ENCODE measurements at regions of chr1 and their contacts with region 1.

Region 1: GRCh38 chr1:165597883-165598675 is 33.0 kb upstream of the MGST3 start:
- DNase-seq: peak; percentile 98
- ATAC-seq: peak; percentile 99
- H3K4me3 ChIP-seq: peak overlapping the region; percentile 60
- H3K27ac ChIP-seq: peak overlapping the region; percentile 35
- H3K4me1 ChIP-seq: peaks cover 2% of the 10 kb centered on the region; the same call in 1 of the 2 replicates
- H3K27me3 ChIP-seq: peaks cover 4% of the 10 kb centered on the region
- CTCF ChIP-seq: no peak
- POLR2A ChIP-seq: peak; percentile 35; the same call in 1 of the 2 replicates
- RAD21 ChIP-seq: no peak

Region 2: GRCh38 chr1:165144757-165145397 is 453.2 kb before region 1 on chr1:
- CTCF ChIA-PET with region 1: no interaction called
- POLR2A ChIA-PET with region 1: no interaction called
- dilution Hi-C with region 1: no loop called
- in situ Hi-C with region 1: loop called (anchors 25 kb)
- intact Hi-C with region 1: loop called (anchors 1 kb)
- DNase-seq: peak; percentile 44
- ATAC-seq: peak; percentile 95
- H3K4me3 ChIP-seq: no peak overlapping the region
- H3K27ac ChIP-seq: no peak overlapping the region
- H3K4me1 ChIP-seq: no peaks in the 10 kb centered on the region
- H3K27me3 ChIP-seq: no peaks in the 10 kb centered on the region
- CTCF ChIP-seq: peak; percentile 70
- POLR2A ChIP-seq: no peak
- RAD21 ChIP-seq: peak; percentile 33

Region 3: DNA sequence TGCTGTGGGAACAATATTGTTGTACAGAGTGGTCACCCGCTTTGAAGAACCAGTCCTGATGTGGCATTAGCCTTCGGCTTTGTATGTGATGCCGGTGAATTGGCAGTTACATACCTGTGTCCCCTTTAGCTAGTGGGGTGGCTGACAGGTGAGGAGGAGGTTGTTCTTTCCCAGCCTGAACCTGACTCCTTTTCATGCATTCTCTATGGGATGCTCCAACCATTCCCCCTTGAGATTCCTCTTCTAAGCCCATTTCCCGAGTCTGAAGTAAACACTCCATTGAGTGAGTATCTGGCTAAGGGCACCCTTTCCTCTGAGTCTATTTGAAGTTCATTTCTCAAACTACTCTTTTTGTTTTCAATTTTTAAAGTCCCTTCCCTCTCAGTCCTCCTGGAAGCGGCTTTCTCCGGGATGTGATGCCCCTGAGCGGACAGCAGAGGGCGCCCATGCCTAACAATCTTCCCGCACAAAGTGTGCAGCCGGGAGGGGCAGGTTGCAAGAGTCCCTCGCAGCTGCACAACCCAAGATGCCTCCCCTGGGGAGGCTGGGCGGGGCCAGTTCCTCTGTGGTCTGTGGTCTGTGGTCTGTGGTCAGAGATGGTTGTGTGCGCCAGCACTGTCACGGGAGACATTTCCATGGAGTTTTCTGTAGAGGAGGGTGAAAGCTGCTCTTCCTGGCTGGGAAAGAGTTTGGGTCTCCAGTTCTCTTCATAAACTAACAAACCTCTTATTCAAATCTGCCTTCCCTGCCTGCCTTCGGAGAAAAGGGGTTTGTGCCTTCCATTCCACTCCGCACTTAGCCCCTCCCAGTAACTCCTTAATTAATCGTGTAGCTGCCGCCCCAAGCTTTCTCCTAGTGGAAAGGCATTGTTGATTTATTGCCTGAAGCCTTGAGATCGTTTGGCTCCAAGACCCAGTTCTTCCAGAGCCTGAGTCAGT is 205.2 kb before region 1 on chr1:
- CTCF ChIA-PET with region 1: interaction called, 29 read pairs
- POLR2A ChIA-PET with region 1: no interaction called
- dilution Hi-C with region 1: loop called (anchors 25 kb)
- in situ Hi-C with region 1: loop called (anchors 5 kb)
- intact Hi-C with region 1: loop called (anchors 1 kb)
- DNase-seq: peak; percentile 82
- ATAC-seq: peak; percentile 99
- H3K4me3 ChIP-seq: no peak overlapping the region
- H3K27ac ChIP-seq: no peak overlapping the region
- H3K4me1 ChIP-seq: no peaks in the 10 kb centered on the region
- H3K27me3 ChIP-seq: peaks cover 17% of the 10 kb centered on the region
- CTCF ChIP-seq: peak; percentile 88
- POLR2A ChIP-seq: no peak
- RAD21 ChIP-seq: peak; percentile 81

Region 4: DNA sequence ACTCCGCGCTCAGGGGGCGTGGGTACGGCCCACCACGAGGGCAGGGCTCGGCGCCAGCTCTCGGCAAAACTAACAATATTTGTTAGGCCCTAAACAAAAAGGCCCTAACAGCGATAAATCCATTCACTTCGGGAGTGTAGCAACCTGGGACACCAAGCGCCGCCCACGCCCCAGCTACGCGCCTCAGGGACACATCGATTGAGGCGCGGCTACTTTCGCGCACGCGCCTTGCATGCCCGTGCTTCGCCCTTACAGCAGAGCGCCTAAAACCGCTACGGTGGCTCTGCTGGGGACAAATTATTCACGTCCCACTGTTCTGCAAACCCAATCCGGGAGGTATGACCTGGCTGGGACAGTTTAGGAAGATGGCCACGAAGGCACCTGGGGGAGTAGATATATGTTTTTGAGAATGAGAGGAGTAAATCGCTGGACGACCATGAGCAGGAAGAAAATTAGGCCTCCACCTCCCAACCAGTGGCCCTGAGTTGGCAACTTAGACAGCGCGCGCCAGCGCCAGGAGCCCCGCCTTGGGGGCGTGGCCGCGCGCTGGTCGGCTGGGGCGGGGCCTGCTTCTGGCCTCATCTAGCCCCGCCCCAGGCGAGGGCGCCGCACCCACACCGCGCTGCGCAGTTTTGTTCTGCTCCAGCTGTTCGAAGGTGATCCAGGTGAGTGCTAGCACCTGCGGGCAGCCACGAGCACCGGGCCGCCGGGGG is 32.7 kb after region 1 on chr1 and contains the start of gene MGST3:
- CTCF ChIA-PET with region 1: interaction called, 3 read pairs
- POLR2A ChIA-PET with region 1: no interaction called
- dilution Hi-C with region 1: no loop called
- in situ Hi-C with region 1: no loop called
- intact Hi-C with region 1: loop called (anchors 1 kb)
- DNase-seq: peak; percentile 95
- ATAC-seq: peak; percentile 93
- H3K4me3 ChIP-seq: peak within 1 kb of the TSS; percentile 74
- H3K27ac ChIP-seq: peak within 1 kb of the TSS; percentile 88
- H3K4me1 ChIP-seq: peaks cover 2% of the 10 kb centered on the region
- H3K27me3 ChIP-seq: no peaks in the 10 kb centered on the region
- CTCF ChIP-seq: no peak
- POLR2A ChIP-seq: peak; percentile 42; the same call in 1 of the 2 replicates
- RAD21 ChIP-seq: no peak
- total RNA-seq, gene MGST3: 132 and 159 TPM in 2 replicates

Region 5: DNA sequence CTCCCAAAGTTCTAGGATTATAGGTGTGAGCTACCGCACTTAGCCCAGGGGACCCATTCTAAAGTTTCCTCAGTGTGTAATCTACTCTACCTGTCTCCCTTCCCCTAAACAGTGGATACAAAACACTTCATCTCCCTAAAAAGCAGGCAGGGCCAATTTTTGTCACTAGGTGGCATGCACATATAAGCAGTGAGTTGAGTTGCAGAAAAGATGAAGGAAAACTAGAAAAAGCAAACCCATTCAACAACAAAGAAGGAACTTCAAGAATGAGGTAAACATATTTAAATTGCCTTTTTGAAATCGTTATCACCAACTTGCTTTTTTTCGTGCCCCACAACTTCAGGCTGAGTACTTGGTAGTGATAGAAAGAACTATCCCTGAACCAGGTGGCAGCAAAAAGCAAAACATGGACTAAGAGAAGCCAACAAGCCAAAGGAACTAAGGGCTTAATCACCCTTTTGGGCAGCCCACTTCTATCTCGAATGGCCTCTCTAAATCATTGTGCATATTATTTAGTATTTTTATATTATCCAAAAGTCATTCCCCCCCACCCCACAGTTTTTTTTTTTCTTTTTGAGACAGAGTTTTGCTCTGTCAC is 119.9 kb after region 1 on chr1:
- CTCF ChIA-PET with region 1: no interaction called
- POLR2A ChIA-PET with region 1: no interaction called
- dilution Hi-C with region 1: no loop called
- in situ Hi-C with region 1: no loop called
- intact Hi-C with region 1: loop called (anchors 1 kb)
- DNase-seq: peak; percentile 71
- ATAC-seq: peak; percentile 92
- H3K4me3 ChIP-seq: no peak overlapping the region
- H3K27ac ChIP-seq: no peak overlapping the region
- H3K4me1 ChIP-seq: no peaks in the 10 kb centered on the region
- H3K27me3 ChIP-seq: no peaks in the 10 kb centered on the region
- CTCF ChIP-seq: peak; percentile 87
- POLR2A ChIP-seq: no peak
- RAD21 ChIP-seq: peak; percentile 94

Region 6: DNA sequence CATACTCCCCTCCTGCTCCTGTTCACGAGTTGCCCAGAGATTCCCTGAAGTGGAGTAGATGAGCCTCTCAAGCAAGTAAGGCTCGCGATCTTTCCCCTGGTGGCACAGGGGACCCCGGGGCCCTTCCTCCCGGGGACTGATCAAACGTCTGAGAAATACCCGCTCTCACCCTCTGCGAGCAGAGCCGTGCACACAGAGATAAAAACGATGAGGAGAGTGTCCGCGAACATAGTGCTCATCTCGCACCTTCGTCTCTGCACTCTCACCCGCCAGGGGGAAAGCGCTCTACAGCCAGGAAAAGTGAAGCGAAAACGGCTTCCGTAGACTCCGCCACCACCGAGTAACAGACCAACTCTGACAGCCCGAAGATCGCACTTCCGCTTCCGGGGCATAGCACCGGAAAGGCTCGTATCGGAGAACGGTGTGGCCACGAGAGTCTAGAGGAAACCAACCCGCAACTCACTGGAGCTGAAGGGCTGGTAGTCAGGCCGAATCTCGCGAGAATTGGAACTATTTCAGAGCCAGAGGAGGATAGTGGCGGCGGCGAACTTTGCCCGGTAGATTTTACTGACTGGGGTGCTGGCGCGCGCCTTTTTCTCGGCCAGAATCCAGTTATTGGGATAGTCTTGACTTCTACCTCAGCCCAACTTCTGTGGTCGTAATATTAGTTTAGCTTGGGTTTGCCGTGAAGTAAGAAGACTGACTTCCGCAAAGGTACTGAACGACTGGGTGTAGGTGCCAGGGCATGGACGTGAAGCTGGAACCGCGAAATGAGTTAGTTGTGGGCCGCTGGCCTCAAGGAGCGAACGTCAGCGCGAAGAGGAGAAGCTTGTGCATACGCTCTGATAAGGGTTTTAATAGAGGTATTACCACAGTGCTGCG is 170.7 kb after region 1 on chr1 and contains the start of gene TMCO1:
- CTCF ChIA-PET with region 1: no interaction called
- POLR2A ChIA-PET with region 1: no interaction called
- dilution Hi-C with region 1: no loop called
- in situ Hi-C with region 1: no loop called
- intact Hi-C with region 1: no loop called
- DNase-seq: peak; percentile 99
- ATAC-seq: peak; percentile 91
- H3K4me3 ChIP-seq: peak within 1 kb of the TSS; percentile 80
- H3K27ac ChIP-seq: peak within 1 kb of the TSS; percentile 95
- H3K4me1 ChIP-seq: peaks cover 7% of the 10 kb centered on the region
- H3K27me3 ChIP-seq: no peaks in the 10 kb centered on the region
- CTCF ChIP-seq: peak; percentile 22
- POLR2A ChIP-seq: peak; percentile 91
- RAD21 ChIP-seq: peak; percentile 44
- total RNA-seq, gene TMCO1: 86.4 and 121 TPM in 2 replicates

Region 7: GRCh38 chr1:165914136-165914798 is 316.2 kb after region 1 on chr1:
- CTCF ChIA-PET with region 1: interaction called, 3 read pairs
- POLR2A ChIA-PET with region 1: no interaction called
- dilution Hi-C with region 1: no loop called
- in situ Hi-C with region 1: loop called (anchors 5 kb)
- intact Hi-C with region 1: loop called (anchors 1 kb)
- DNase-seq: peak; percentile 88
- ATAC-seq: peak; percentile 89
- H3K4me3 ChIP-seq: no peak overlapping the region
- H3K27ac ChIP-seq: no peak overlapping the region
- H3K4me1 ChIP-seq: peaks cover 5% of the 10 kb centered on the region
- H3K27me3 ChIP-seq: no peaks in the 10 kb centered on the region
- CTCF ChIP-seq: peak; percentile 96
- POLR2A ChIP-seq: peak; percentile 57
- RAD21 ChIP-seq: peak; percentile 100

Measured in IMR-90 (cell line).